Panc1 (cell line): ENCODE measurements at regions of chr18 and their contacts with region 1.

Region 1: DNA sequence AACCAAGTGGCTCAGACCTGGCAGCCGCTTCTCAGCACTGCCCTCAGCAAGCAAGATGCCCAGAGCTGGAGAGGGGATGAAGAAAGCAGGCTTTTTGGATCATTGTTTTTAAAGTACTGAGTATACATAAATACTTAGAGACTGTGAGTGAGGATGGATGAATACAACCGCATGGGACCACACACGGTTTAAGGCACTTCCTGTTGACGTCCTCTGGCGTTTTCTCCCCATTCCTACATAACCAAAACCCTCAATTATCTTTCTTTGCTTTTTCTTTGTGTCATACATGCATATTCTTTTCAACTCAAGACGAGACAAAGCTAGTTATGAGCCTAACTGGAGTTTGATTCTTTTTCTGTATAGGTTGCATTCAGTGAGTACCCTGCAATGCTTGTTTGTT is 198.4 kb downstream of the GALR1 start:
- DNase-seq: no peak
- ATAC-seq: peak; percentile 47; the same call in 1 of the 2 replicates
- H3K4me3 ChIP-seq: no peak overlapping the region
- H3K27ac ChIP-seq: no peak overlapping the region
- H3K4me1 ChIP-seq: no peaks in the 10 kb centered on the region
- H3K27me3 ChIP-seq: peaks cover 18% of the 10 kb centered on the region
- CTCF ChIP-seq: no peak

Region 2: DNA sequence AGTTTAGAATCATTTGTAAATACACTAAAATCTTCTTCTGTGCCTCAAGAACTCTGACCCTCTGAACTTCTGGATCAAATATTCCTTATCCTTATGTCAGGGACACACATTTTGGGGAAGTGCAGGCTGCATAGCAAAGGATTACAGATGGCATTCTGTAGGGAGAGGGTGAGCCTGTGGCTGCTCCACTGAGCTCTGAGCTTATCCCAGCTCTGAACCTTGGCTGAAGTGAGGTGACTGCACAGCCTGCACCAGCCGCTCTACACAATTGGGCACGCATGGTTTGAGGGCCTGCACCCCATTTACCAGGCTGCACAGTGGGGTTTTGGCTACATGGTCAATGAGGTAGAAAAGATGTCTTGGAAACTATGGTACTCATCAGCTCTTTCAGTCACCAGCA is 53.2 kb after region 1 on chr18:
- CTCF ChIA-PET with region 1: no interaction called
- POLR2A ChIA-PET with region 1: interaction called, 11 read pairs
- in situ Hi-C with region 1: no loop called
- intact Hi-C with region 1: no loop called
- DNase-seq: no peak
- ATAC-seq: no peak
- H3K4me3 ChIP-seq: no peak overlapping the region
- H3K27ac ChIP-seq: no peak overlapping the region
- H3K4me1 ChIP-seq: no peaks in the 10 kb centered on the region
- H3K27me3 ChIP-seq: no peaks in the 10 kb centered on the region; the same call in 1 of the 2 replicates
- CTCF ChIP-seq: no peak

Region 3: DNA sequence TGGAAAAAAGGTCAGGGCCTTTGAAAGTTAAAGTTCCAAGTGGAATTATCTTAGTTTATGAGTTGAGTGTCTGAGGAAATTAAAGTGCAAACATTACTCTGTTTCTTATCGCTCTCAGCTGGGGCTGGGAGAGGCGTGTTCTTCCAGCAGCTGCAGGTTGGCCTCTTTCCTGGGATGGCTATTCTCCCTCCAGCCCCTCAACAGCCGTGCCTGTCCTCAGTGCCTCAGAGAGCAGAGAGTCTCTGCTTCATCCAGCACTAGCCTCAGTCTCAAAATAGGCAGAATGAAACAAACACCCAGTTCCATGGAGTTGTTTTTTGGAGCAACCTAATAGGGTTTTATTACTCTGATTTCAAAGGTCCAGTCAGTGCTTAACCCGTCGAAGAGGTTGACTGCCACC is 99.7 kb after region 1 on chr18:
- CTCF ChIA-PET with region 1: no interaction called
- POLR2A ChIA-PET with region 1: no interaction called
- in situ Hi-C with region 1: no loop called
- intact Hi-C with region 1: no loop called
- DNase-seq: no peak
- ATAC-seq: no peak
- H3K4me3 ChIP-seq: no peak overlapping the region
- H3K27ac ChIP-seq: no peak overlapping the region
- H3K4me1 ChIP-seq: no peaks in the 10 kb centered on the region
- H3K27me3 ChIP-seq: no peaks in the 10 kb centered on the region
- CTCF ChIP-seq: no peak

Region 4: DNA sequence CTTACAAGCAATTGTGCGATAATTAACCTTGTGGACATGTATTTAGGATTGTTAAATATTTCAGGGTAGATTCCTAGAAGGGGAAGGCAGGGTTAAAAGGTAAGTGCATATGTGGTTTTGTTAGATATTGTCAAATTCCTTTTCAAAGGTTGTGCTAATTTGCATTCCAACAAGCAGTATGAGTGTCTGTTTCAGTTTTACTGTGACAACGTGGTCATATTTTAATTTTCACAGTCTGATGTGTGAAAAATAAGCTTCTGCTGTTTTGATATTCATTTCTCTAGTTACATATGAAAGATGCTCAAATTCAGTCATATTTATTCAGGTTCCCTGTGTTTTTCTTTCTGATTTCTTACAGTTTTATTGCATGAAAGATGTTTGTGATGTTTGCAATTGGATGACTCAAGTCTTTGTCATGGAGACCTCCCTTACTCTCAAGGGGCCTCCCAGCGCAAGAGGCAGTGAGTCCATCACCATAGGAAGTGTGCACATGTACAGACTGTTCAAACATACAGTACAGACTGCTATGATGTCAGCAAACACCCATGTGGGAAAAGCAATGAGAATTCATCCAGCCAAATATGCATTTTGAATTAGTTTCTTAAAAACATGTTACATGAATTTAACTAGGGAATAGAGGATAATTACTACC is 112.4 kb after region 1 on chr18:
- CTCF ChIA-PET with region 1: no interaction called
- POLR2A ChIA-PET with region 1: no interaction called
- in situ Hi-C with region 1: no loop called
- intact Hi-C with region 1: no loop called
- DNase-seq: peak; percentile 81
- ATAC-seq: peak; percentile 91
- H3K4me3 ChIP-seq: no peak overlapping the region
- H3K27ac ChIP-seq: no peak overlapping the region
- H3K4me1 ChIP-seq: no peaks in the 10 kb centered on the region; the same call in 1 of the 2 replicates
- H3K27me3 ChIP-seq: no peaks in the 10 kb centered on the region
- CTCF ChIP-seq: no peak